GM10248 (cell line): ENCODE measurements at regions of chr1 and their contacts with region 1.

Region 1: GRCh38 chr1:119675349-119676345 is 27.6 kb upstream of the ZNF697 start:
- DNase-seq: peak; percentile 79
- CTCF ChIP-seq: peak; percentile 73

Region 2: DNA sequence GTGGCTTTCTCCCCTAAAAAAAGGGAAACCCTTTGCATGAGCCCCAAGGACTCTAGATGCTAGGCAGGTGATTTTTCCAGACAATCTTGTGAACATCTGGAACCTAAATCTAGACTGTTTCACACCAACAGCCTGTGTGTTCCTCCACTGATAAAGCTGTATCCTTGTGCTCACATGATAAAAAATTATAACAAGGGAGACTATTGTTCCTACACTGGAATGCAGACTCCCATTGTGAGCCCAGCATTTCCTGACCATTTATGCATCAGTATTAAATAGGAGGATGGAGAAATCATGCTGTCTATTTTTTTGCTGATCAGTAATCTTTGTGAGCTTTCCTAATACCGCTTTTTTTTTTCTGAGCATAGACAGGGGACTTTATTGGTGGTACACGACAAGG is 80.0 kb before region 1 on chr1:
- CTCF ChIA-PET with region 1: interaction called, 13 read pairs
- POLR2A ChIA-PET with region 1: no interaction called
- DNase-seq: no peak
- CTCF ChIP-seq: no peak

Region 3: GRCh38 chr1:119602169-119602568 is 73.5 kb before region 1 on chr1:
- CTCF ChIA-PET with region 1: interaction called, 13 read pairs
- POLR2A ChIA-PET with region 1: no interaction called
- DNase-seq: no peak
- CTCF ChIP-seq: no peak

Region 4: GRCh38 chr1:119635811-119636390 is 39.7 kb before region 1 on chr1:
- CTCF ChIA-PET with region 1: interaction called, 1,134 read pairs
- POLR2A ChIA-PET with region 1: no interaction called
- DNase-seq: peak; percentile 38
- CTCF ChIP-seq: no peak

Region 5: DNA sequence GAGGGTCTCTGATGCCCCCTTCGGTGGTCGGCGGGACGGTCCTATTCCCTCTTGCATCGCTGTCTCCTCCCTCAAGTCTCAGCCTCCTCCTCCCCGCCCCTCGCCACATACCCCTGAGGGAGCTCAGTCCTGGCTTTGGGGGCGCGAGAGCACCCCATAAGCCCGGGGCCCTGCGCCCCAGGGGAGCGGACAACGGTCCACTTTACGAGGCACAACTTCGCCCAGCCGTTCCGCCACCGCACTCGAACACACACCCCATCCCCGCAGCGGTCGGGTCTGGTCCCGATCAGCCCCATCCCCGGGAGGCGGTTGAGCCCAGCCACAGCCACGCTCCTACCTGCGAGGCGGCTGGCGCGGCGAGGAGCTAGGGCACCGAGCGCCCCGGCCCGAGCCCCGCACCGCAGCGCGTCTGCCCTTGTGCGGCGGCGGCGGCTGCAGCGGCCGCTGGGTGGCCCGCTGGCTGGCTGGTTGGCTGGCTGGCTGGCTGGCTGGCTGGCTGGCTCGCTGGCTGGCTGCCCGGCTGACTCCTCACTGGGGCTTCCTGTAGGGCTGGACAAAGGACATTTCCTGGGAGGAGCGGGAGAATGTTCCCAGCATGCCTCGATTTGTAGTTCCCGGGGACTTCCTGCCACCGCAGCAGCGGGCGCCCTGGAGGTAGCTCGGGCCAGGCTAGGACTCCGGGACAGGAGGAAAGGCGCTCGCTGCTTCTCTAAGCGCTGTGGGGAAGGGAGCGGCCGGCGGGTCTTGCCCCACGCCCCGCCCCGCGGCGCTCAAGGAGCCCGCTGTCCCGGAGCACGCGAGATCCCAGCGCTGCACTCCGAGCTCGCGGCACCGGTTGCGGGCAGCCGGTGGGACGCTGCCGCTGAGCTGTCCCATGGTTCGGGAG is 27.7 kb before region 1 on chr1 and contains the start of gene ZNF697:
- CTCF ChIA-PET with region 1: interaction called, 380 read pairs
- POLR2A ChIA-PET with region 1: no interaction called
- DNase-seq: peak; percentile 82
- CTCF ChIP-seq: no peak

Region 6: DNA sequence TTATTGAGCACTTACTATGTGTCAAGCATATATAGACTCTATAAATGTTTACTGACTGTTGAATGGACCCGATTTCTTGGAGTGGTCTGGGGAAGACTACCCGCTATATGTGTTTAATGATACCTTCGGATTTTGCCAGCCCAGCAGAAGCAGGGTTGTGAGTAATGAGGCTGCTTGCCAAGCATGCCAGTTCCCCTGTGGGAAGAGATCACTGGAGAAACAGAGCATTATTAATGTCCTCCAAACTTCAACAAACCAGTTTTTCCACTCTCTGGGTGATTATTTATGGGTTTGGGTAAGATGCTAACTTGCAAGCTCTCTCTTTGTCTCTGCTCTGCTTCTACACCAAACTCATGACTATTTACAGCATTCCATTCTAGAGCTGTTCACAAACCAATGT is 11.0 kb after region 1 on chr1:
- CTCF ChIA-PET with region 1: interaction called, 42 read pairs
- POLR2A ChIA-PET with region 1: no interaction called
- DNase-seq: no peak
- CTCF ChIP-seq: no peak

Region 7: DNA sequence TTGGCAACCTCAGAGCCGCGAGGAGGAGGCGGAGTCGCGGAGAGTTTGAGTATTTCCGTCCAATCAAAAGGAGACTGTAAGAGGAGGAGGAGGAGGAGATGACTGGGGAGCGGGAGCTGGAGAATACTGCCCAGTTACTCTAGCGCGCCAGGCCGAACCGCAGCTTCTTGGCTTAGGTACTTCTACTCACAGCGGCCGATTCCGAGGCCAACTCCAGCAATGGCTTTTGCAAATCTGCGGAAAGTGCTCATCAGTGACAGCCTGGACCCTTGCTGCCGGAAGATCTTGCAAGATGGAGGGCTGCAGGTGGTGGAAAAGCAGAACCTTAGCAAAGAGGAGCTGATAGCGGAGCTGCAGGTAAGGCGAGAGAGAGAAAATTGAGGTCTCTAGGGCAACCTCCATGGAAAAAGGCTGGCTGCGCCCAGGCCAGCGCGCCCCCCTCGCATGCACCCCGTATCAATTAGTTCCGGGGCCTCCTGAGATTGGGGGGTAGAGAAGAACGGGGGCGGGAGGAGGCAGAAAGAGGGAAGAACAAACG is 36.2 kb after region 1 on chr1 and contains the start of gene PHGDH:
- CTCF ChIA-PET with region 1: interaction called, 12 read pairs
- POLR2A ChIA-PET with region 1: no interaction called
- DNase-seq: peak; percentile 73
- CTCF ChIP-seq: no peak